Activated CD4-positive, alpha-beta T cell treated with anti-CD3 and anti-CD28 coated beads, Interleukin-2, amount 10 ng/mL, durations not matched to agents 7 days and 5 days (primary cell): ENCODE measurements at regions of chr13 and their contacts with region 1.

Region 1: DNA sequence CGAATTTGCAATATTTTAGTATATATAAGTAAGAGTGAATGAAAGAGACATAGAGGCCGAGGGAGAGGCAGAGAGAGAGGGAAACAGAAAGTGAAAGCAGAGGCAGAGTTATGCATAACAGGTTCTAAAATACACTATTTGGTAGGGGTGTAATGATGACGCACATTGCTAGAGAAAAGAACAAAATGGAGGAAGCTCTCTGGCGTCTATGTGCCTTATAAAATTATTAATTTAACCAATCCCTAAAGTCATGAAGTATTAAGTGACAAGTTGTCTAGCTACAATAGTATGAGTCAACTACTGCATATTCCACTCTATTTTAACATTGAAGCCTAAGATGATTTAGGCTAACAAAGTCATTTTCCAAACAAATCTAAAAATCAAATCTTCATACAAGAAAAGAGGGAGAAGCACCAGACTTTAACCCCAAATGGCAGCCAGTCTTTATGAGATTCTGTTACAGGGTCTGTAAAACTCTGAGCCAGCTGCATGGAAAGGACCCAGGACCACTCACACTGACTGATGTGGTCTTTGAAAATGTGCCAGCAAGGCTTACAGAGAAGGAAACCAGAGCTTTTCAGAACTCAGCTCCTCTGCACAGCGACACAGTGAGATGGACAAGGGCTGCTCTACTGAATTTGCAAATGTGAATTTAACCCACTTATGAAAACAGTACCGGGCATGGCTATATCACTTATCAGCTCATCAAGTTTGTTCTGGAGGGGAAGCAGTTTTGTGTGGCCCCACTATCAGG is 99.0 kb upstream of the SERP2 start:
- DNase-seq: peak; percentile 57
- H3K4me3 Mint-ChIP-seq: peak overlapping the region; percentile 66
- H3K27ac Mint-ChIP-seq: peak overlapping the region; percentile 92
- H3K4me1 Mint-ChIP-seq: peaks cover 35% of the 10 kb centered on the region
- H3K27me3 Mint-ChIP-seq: no peaks in the 10 kb centered on the region

Region 2: DNA sequence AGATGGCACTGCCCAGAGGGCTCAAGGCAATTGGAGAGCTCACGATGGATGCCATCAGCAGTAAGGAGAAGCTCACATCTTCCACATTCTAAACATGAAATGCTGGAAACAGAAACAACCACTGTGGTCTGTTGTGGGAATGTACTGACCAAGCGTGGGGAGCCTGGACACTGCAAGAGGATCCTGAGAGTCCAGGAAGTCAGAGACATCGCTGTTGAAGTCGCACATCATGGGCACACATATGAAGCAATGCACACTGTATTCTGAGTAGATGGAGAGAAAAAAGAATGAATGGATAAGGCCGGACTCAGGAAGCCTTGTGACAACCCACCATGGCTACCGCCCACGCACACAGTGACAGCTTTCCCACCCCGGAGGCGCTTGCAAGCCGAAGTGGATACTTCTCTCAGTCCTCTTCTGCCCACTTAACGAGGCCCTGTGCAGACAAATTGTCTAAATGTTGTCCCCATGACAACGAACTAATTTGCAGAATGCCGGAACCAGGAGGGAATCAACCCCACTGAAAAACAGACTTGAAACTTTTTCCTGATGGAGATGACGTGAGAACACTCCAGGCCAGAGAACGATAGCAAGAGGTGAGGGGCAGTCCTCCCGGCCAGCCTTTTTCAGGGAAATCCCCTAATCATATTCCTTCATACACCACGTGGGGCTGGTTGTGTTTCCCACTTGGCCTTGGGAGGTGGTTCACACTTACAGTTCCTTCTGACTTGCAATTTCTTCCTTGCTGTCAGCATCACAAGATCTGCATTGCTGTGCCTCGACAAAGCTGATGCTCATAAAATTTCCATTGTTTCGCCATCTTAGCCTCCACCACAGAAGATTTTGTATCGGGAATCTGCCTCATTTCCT is 10.6 kb before region 1 on chr13:
- CTCF ChIA-PET with region 1: interaction called, 11 read pairs
- POLR2A ChIA-PET with region 1: interaction called, 3 read pairs
- DNase-seq: no peak
- H3K4me3 Mint-ChIP-seq: no peak overlapping the region
- H3K27ac Mint-ChIP-seq: no peak overlapping the region
- H3K4me1 Mint-ChIP-seq: peaks cover 15% of the 10 kb centered on the region
- H3K27me3 Mint-ChIP-seq: peaks cover 16% of the 10 kb centered on the region